Cardiac septum (tissue), 1 donor: ENCODE measurements at regions of chr1 and their contacts with region 1.

Region 1: GRCh38 chr1:117758444-117759316 is 152.8 kb downstream of the TENT5C start:
- DNase-seq: no peak

Region 2: GRCh38 chr1:117059678-117060440 is 698.8 kb before region 1 on chr1 and contains the start of gene TTF2:
- intact Hi-C with region 1: loop called (anchors 10 kb)
- DNase-seq: peak; percentile 96
- total RNA-seq, gene TTF2: 9.4 TPM

Region 3: DNA sequence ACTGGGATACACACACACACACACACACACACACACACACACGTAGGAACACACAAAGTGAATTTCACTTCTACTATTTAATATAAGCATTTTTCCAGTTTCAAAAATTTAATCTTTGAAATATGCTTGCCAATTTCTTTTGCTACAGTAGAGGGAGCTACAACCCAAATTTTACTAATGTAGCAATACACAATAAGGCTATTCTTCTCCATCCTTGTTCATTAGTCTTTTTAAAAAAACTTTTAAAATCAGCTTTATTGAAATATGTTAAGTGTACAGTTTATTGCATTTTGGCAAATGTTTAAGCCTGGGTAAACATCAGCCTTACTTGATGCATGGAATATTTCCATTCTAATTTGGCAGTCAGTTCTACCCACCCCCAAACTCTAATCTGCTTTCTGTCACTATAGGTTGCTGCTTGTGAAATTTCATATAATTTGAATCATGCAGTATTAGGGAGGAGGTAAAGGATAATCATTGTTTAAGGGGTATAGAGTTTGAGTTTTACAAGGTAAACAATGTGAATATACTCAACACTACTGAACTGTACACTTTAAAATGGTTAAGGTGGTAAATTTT is 245.8 kb before region 1 on chr1:
- intact Hi-C with region 1: loop called (anchors 5 kb)
- DNase-seq: no peak

Region 4: DNA sequence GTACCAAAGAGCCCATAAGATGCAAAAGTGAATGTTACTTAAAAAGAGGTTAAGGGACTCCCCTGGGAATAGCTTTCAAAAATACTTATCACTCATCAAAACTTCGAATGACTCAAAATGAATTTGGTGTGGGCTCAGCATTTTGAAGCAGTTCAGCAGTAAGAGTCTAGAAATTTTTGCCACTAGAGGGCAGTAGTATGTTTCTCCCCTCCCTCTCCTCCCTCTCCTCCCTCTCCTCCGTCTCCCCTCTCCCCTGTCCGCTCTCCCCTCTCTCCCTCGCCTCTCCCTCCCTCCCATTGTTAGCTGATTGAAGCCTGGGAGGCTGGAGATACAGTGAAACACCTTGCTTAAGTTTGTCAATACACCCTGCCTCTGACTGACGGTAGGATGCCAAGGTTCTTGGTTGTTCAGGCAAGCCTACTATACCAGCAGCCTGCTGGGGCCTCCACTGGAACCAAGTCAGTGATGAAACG is 223.6 kb before region 1 on chr1:
- intact Hi-C with region 1: loop called (anchors 1 kb)
- DNase-seq: no peak

Region 5: DNA sequence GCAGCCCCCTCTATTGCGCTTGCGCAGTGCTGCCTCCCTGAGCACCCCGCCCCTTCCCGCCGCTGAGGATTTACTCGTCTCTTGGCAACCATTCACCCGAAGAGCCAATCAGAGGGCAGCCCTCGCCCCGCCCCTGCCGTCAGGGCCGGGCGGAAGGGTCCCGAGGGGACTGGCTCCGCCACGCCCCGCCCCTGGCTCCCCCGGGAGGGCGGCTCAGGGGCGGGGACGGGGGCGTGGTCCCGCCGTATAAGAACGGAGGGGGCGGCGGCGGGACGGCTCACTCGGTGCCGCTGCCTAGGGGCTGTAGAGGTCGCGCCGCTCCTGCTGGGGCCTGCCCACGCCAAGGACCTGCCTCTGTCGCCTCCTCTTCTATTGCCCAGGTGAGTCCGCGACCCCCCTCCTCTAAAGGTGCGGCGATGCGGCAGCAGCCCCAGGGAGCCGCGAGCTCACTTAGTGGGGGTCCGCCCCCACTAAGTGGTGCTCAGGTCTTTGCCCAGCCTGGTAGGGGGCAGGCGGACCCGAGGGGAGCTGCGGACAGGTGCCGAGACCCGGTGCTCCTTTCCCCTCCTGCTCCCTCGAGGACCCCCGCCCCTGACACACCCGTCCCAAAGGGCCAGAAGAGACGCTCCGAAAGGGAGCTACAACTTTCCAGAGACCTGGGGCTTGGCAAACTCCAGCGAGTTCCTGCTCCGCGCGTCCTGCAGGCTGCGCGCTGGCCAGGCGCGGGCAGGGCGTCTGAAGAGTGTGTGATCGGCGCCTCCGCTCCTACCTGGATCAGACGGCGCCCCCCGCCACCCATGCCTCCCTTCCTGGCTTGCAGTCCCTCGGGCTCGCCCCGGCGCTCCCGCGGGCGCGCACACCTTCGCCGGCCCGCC is 152.7 kb before region 1 on chr1 and contains the start of gene TENT5C:
- intact Hi-C with region 1: loop called (anchors 5 kb)
- DNase-seq: peak; percentile 98
- total RNA-seq, gene TENT5C: 7.4 TPM

Region 6: GRCh38 chr1:117674521-117675397 is 83.9 kb before region 1 on chr1:
- intact Hi-C with region 1: loop called (anchors 10 kb)
- DNase-seq: no peak

Region 7: DNA sequence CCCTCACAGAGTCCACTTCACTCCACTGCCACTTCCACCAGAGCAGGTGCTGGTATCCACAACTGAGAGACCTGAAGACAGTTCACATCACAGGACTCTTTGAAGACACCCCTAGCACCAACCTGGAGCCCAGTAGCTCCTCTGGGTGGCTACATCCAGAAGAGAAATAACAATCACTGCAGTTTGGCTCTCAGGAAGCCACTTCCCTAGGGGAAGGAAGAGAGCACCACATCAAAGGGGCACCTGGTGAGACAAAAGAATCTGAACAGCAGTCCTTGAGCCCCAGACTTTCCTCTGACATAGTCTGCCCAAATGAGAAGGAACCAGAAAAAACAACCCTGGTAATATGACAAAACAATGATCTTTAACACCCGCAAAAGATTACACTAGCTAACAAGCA is 39.7 kb before region 1 on chr1:
- intact Hi-C with region 1: no loop called
- DNase-seq: no peak

Region 8: GRCh38 chr1:117821782-117822447 is 63.2 kb after region 1 on chr1:
- intact Hi-C with region 1: no loop called
- DNase-seq: no peak

Region 9: DNA sequence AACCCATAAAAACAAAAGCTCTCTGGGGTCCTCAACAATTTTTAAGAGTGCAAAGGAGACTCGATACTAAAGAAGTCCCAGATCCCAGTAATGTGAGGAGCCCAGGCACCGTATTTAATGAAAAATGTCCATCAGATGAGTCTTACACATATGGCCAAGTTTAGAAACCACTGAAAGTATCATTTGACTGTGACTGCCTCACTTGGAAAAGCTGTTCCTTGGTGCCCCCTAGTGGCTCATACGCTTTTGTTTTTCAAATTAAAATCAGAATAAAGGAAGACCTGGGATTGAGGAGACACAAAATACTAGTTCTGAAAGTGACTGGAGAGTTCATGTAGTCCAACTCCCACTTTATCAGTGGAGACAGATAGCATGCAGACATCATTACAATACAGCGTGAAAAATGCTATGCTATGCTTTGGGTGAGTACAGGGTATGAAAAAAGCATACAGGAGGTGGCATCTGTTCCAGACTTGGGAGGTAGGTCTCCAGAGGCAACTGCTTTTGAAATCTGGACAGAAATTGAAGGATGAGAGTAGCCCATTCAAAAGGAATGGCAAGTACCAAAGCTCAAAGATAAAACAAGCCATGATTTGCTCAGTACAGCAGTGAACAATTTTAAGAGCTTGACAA is 136.9 kb after region 1 on chr1:
- intact Hi-C with region 1: loop called (anchors 5 kb)
- DNase-seq: no peak